Activated naive CD4-positive, alpha-beta T cell treated with anti-CD3 and anti-CD28 coated beads for 36 hours (primary cell): ENCODE measurements at regions of chr2 and their contacts with region 1.

Region 1: GRCh38 chr2:159712143-159712928 is at the start of gene MARCHF7:
- DNase-seq: peak; percentile 98
- H3K4me3 Mint-ChIP-seq: peak within 1 kb of the TSS; percentile 99
- H3K27ac Mint-ChIP-seq: peak within 1 kb of the TSS; percentile 100
- H3K4me1 Mint-ChIP-seq: peaks cover 44% of the 10 kb centered on the region
- H3K27me3 Mint-ChIP-seq: no peaks in the 10 kb centered on the region
- total RNA-seq, gene MARCHF7: 81.5 to 82.4 TPM

Region 2: GRCh38 chr2:158456309-158457066 is 1255.8 kb before region 1 on chr2 and contains the starts of genes CCDC148 and PKP4:
- CTCF ChIA-PET with region 1: no interaction called
- intact Hi-C with region 1: loop called (anchors 1 kb)
- DNase-seq: peak; percentile 94
- H3K4me3 Mint-ChIP-seq: peak within 1 kb of the TSS; percentile 95
- H3K27ac Mint-ChIP-seq: peak within 1 kb of the TSS; percentile 79
- H3K4me1 Mint-ChIP-seq: peaks cover 24% of the 10 kb centered on the region
- H3K27me3 Mint-ChIP-seq: no peaks in the 10 kb centered on the region
- total RNA-seq, gene CCDC148: not detected
- total RNA-seq, gene PKP4: 52.9 to 57.0 TPM

Region 3: GRCh38 chr2:159124441-159124911 is 587.9 kb before region 1 on chr2:
- CTCF ChIA-PET with region 1: no interaction called
- intact Hi-C with region 1: loop called (anchors 5 kb)
- DNase-seq: peak; percentile 60
- H3K4me3 Mint-ChIP-seq: no peak overlapping the region
- H3K27ac Mint-ChIP-seq: peak overlapping the region; percentile 82
- H3K4me1 Mint-ChIP-seq: peaks cover 20% of the 10 kb centered on the region
- H3K27me3 Mint-ChIP-seq: no peaks in the 10 kb centered on the region

Region 4: GRCh38 chr2:159615140-159615951 is 97.0 kb before region 1 on chr2:
- CTCF ChIA-PET with region 1: interaction called, 3 read pairs
- intact Hi-C with region 1: loop called (anchors 1 kb)
- DNase-seq: peak; percentile 53
- H3K4me3 Mint-ChIP-seq: peak overlapping the region; percentile 72
- H3K27ac Mint-ChIP-seq: no peak overlapping the region
- H3K4me1 Mint-ChIP-seq: peaks cover 6% of the 10 kb centered on the region
- H3K27me3 Mint-ChIP-seq: peaks cover 15% of the 10 kb centered on the region

Region 5: DNA sequence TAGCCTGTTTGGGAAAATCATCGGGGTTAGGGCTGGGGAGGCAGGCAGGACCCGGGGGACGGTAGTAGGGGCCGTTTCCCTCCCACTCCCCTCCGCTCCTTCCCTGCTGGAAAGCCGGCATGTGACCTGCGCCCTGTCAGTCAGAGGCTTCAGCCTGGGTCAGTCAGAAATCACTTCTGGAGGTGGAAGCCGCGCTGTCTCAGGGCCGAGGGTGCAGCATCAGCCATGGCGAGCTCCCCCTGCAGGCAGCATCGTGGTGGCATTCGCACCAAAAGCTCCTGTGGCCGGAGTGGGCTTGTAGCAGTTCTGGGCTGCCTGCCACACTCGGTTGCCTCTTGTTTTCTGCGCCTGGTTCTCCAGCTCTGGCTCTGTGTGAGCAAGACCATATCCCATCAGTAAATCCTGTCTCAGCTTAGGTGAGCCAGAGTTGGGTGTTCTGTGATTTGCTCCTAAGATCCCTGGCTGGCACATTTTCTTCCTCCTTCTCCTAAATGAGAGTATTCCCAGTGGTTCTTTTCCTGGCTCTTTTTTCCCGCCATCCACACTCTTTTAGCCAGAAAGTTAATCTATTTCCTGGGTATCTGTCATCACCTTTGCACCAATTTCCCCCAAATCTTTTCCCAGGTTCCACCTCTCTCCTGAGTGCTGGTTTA is 209.5 kb after region 1 on chr2:
- CTCF ChIA-PET with region 1: interaction called, 3 read pairs
- intact Hi-C with region 1: loop called (anchors 1 kb)
- DNase-seq: peak; percentile 92
- H3K4me3 Mint-ChIP-seq: no peak overlapping the region
- H3K27ac Mint-ChIP-seq: no peak overlapping the region
- H3K4me1 Mint-ChIP-seq: peaks cover 22% of the 10 kb centered on the region
- H3K27me3 Mint-ChIP-seq: peaks cover 27% of the 10 kb centered on the region

Region 6: DNA sequence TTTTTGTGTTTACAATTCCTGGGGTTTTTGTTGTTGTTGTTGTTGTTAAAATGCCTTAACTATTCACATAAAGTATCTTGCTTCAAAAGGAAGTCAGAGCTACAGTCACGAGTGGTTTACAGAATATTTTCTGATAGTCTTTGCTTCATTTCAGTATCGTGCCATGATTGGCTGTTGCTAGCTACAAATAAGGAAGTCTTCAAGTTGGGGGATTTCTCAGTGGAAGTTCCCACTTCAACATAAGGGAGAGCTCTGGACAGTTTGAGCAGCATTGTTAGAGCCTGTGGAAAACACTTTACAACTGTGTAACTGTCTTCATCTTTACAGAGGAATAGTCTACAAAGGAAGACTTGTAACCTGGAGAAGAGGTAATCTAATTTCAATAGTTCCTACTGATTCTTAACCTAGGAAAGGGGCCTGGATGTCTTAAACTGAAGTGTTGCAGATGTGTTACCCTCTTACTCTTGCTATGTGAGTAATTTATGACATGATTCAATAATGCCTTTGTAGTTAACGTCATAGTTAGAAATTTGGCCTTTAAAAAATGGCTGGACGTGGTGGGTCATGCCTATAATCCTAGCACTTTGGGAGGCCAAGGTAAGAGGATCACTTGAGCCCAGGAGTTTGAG is 1424.5 kb after region 1 on chr2:
- CTCF ChIA-PET with region 1: no interaction called
- intact Hi-C with region 1: loop called (anchors 2 kb)
- DNase-seq: peak; percentile 48
- H3K4me3 Mint-ChIP-seq: peak overlapping the region; percentile 88
- H3K27ac Mint-ChIP-seq: peak overlapping the region; percentile 98
- H3K4me1 Mint-ChIP-seq: peaks cover 49% of the 10 kb centered on the region
- H3K27me3 Mint-ChIP-seq: no peaks in the 10 kb centered on the region